ENCODE measurements at regions of chr16 and their contacts with region 1.

Region 1: GRCh38 chr16:66934153-66934838 is at the start of gene CIAO2B:
- DNase-seq: peak; percentile 79 to 94 (median 86)
- ATAC-seq: peak; percentile 89
- H3K4me3 ChIP-seq: peak within 1 kb of the TSS; percentile 100
- H3K4me3 Mint-ChIP-seq: peak within 1 kb of the TSS; percentile 98
- H3K27ac ChIP-seq: peak within 1 kb of the TSS; percentile 72 to 78
- H3K27ac Mint-ChIP-seq: peak within 1 kb of the TSS; percentile 97
- H3K4me1 ChIP-seq: peaks cover 48% of the 10 kb centered on the region
- H3K4me1 Mint-ChIP-seq: peaks cover 62% of the 10 kb centered on the region
- H3K27me3 ChIP-seq: no peaks in the 10 kb centered on the region
- H3K27me3 Mint-ChIP-seq: no peaks in the 10 kb centered on the region
- CTCF ChIP-seq: no peak
- total RNA-seq, gene CIAO2B: 58.6 to 70.4 TPM

Region 2: DNA sequence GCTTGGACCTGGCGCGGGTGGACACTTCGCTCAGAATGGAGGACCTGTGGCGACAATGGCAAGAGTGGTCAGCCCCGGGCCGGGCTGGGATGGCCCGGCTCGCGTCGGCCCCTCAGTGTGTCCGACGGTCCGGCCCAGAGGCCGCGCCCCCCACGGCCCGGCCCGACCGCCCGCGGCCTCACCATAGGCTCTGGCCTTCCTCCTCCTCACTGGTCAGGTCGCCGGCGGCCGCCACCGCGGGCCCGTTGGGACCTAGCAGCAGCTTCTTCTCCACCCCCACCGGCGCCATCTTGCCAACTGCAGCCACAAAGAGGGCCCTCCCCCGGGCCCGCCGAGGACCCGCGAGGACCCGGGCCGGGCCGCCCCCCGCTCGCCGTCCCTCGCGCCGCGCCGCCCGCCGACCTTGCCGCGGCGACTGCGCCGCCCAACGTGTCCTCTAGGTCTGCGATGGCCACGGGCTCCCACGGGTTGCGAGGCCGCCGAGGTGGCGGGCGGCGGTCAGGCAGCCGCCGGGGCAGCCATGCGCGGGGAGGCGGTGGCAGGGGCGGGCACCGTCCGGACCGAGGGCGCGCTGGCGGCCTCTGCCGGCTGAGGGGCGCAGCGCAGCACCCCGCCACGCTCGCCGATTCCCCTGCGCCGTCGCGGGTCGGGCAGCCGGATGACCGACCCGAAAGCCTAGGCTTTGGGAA is 182.8 kb before region 1 on chr16 and contains the start of gene DYNC1LI2:
- CTCF ChIA-PET with region 1: no interaction called
- POLR2A ChIA-PET with region 1: no interaction called
- intact Hi-C with region 1: loop called in 1 of 2 experiments (anchors 5 kb)
- DNase-seq: peak; percentile 66 to 92 (median 78)
- ATAC-seq: peak; percentile 94
- H3K4me3 ChIP-seq: peak within 1 kb of the TSS; percentile 81
- H3K4me3 Mint-ChIP-seq: peak within 1 kb of the TSS; percentile 94
- H3K27ac ChIP-seq: peak within 1 kb of the TSS in 1 of 2 donors; percentile 66
- H3K27ac Mint-ChIP-seq: peak within 1 kb of the TSS; percentile 91
- H3K4me1 ChIP-seq: peaks cover 32% of the 10 kb centered on the region
- H3K4me1 Mint-ChIP-seq: peaks cover 37% of the 10 kb centered on the region
- H3K27me3 ChIP-seq: no peaks in the 10 kb centered on the region
- H3K27me3 Mint-ChIP-seq: peaks cover 19% of the 10 kb centered on the region
- CTCF ChIP-seq: peak; percentile 67
- total RNA-seq, gene DYNC1LI2: 81.8 to 82.4 TPM

Region 3: DNA sequence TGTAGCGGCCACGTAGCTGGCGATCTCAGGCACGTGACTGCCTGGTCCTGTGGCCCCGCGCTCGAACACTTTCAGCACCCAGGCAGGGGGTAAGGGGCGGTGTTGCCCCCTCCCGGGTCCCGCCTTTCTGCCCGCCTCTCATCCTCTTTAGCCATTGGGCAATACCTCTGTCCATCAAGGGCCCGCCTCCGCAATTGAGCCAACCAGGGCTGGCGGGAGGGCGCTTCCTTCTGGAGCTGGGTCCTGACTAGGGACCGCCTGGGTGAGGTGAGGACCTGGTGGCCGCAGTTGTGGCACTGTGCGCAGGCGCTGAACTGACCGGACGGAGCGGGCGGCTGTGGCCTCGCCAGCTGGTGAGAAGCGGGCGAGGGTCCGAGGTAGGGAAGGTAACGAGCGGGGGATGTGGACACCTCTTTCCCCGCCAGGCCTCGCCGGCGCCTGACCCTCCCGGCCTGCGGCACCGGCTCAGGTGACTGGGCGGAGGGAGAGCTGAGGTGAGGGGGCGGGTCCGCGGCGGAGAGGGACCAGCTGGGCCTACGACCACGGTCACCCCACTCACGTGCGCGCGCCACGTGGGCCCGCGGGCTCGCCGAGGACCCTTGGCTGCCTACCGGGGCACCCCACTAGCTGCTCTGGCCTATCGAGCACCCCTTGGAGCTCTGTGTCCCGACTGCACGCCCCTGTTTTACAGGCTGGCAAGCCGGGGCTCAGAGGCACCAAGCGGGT is 53.8 kb before region 1 on chr16 and contains the start of gene PDP2:
- CTCF ChIA-PET with region 1: no interaction called
- POLR2A ChIA-PET with region 1: interaction called, 8 read pairs
- intact Hi-C with region 1: loop called in 1 of 2 experiments (anchors 5 kb)
- DNase-seq: peak; percentile 74 to 95 (median 86)
- ATAC-seq: peak; percentile 98
- H3K4me3 ChIP-seq: peak within 1 kb of the TSS; percentile 93
- H3K4me3 Mint-ChIP-seq: peak within 1 kb of the TSS; percentile 100
- H3K27ac ChIP-seq: no peak within 1 kb of the TSS
- H3K27ac Mint-ChIP-seq: peak within 1 kb of the TSS; percentile 75
- H3K4me1 ChIP-seq: peaks cover 32% of the 10 kb centered on the region
- H3K4me1 Mint-ChIP-seq: peaks cover 33% of the 10 kb centered on the region
- H3K27me3 ChIP-seq: no peaks in the 10 kb centered on the region
- H3K27me3 Mint-ChIP-seq: no peaks in the 10 kb centered on the region
- CTCF ChIP-seq: no peak
- total RNA-seq, gene PDP2: 3.3 to 5.9 TPM

Region 4: DNA sequence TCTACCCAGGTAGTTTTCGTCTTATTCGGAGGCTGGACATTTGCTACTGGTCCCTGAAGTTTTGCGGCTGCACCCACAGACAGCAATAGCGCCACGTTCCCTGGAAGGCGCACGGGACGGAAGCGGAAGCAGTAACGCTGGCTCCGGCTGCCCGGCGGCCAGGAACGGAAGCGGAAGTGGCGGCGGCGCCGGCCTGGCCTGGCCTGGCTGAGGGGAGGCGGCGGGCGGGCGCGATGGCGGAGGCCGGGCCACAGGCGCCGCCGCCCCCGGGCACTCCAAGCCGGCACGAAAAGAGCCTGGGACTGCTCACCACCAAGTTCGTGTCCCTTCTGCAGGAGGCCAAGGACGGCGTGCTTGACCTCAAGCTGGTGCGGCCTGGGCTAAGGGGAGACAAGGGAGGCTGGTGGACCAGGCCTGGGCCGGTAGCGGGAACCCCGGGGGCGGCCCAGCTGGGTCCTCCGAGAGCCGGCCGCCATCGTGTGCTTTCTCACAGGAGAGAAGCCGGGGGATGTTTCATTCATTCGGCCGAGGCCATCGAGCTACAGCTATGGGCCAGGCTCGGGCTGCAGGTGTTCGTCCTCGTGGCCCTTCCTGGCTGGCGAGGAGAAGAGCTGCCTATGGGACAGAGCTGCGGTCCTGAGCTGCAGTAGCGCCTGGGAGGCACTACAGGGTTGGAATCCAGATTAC is 257.8 kb after region 1 on chr16 and contains the start of gene E2F4:
- CTCF ChIA-PET with region 1: no interaction called
- POLR2A ChIA-PET with region 1: no interaction called
- intact Hi-C with region 1: loop called in 1 of 2 experiments (anchors 5 kb)
- DNase-seq: peak; percentile 72 to 93 (median 82)
- ATAC-seq: peak; percentile 88
- H3K4me3 ChIP-seq: peak within 1 kb of the TSS; percentile 95
- H3K4me3 Mint-ChIP-seq: peak within 1 kb of the TSS; percentile 92
- H3K27ac ChIP-seq: peak within 1 kb of the TSS; percentile 69 to 86
- H3K27ac Mint-ChIP-seq: peak within 1 kb of the TSS; percentile 87
- H3K4me1 ChIP-seq: peaks cover 51% of the 10 kb centered on the region
- H3K4me1 Mint-ChIP-seq: peaks cover 43% of the 10 kb centered on the region
- H3K27me3 ChIP-seq: no peaks in the 10 kb centered on the region
- H3K27me3 Mint-ChIP-seq: no peaks in the 10 kb centered on the region
- CTCF ChIP-seq: no peak
- total RNA-seq, gene E2F4: 50.9 to 56.1 TPM

Measured in CD4-positive, alpha-beta T cell (primary cell).